ENCODE measurements at regions of chr2 and their contacts with region 1.

Region 1: GRCh38 chr2:106160786-106161261 is 33.3 kb downstream of the UXS1 start:
- DNase-seq: peak; percentile 62
- ATAC-seq: peak; percentile 75
- H3K4me3 Mint-ChIP-seq: peak overlapping the region; percentile 91
- H3K27ac Mint-ChIP-seq: peak overlapping the region; percentile 98
- H3K4me1 Mint-ChIP-seq: peaks cover 68% of the 10 kb centered on the region
- H3K27me3 Mint-ChIP-seq: no peaks in the 10 kb centered on the region

Region 2: GRCh38 chr2:106137731-106138521 is 22.9 kb before region 1 on chr2:
- POLR2A ChIA-PET with region 1: interaction called, 38 read pairs
- DNase-seq: no peak
- ATAC-seq: peak; percentile 70
- H3K4me3 Mint-ChIP-seq: peak overlapping the region; percentile 71
- H3K27ac Mint-ChIP-seq: peak overlapping the region; percentile 91
- H3K4me1 Mint-ChIP-seq: peaks cover 39% of the 10 kb centered on the region
- H3K27me3 Mint-ChIP-seq: no peaks in the 10 kb centered on the region

Region 3: DNA sequence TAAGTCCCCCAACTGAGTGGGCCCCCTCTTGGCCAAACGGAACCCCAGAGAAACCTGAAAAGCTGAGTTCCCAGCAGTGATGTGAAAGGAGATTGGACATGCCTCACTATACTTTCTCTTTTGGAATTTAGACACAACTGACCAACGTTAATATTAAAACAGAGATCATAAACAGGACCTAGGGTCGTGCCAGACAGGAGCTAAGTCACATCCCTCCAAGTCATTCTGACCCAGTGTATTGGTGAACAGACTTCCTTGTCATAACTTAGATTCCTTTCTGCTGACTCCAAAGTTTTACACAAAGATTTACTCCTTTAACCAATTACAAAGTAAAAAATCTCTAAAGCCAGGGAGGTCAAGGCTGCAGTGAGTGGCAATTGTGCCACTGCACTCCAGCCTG is 13.7 kb before region 1 on chr2:
- POLR2A ChIA-PET with region 1: interaction called, 20 read pairs
- DNase-seq: no peak
- ATAC-seq: no peak
- H3K4me3 Mint-ChIP-seq: peak overlapping the region; percentile 35
- H3K27ac Mint-ChIP-seq: peak overlapping the region; percentile 84
- H3K4me1 Mint-ChIP-seq: peaks cover 55% of the 10 kb centered on the region
- H3K27me3 Mint-ChIP-seq: no peaks in the 10 kb centered on the region

Region 4: DNA sequence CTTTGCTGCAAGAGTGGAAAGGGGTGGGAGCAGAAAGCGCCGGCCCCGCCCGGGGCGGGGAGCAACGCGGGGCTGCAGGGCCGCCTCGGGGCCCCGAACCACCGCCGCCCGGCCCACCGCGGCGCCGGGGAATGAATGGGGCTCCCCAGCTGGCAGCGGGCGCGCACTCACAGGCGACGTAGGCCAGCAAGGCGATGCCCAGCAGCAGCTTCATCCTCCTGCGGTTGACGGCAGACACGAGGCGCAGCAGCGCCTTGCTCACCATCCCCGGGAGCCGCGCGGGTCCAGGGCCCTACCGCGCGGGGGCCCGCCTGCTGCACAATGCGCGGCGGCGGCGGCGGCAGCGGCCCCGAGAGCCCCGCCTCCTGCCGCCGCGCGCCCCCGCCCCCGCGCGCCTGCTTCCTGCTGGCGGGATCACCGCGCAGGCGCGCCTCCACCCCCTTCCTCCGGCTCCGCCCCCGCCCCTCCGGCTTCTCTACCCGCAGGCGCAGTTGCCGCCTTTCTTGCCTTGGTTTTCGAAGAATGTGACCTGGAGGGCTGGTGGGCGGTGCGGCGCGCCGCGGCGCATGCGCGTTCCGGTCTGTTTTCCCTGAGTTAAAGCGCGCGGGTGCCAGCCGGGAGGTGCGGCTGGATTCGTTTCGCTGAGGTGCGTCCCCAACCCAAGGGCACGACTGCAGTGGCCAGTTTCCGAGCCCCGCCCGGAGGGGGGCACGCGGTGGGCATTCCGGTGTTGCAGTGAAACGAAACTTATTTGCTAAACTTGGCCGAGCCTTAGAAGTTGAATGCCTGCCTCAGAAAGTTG is 33.4 kb after region 1 on chr2 and contains the start of gene UXS1:
- POLR2A ChIA-PET with region 1: interaction called, 53 read pairs
- DNase-seq: peak; percentile 98
- ATAC-seq: peak; percentile 84
- H3K4me3 Mint-ChIP-seq: peak within 1 kb of the TSS; percentile 89
- H3K27ac Mint-ChIP-seq: peak within 1 kb of the TSS; percentile 81
- H3K4me1 Mint-ChIP-seq: peaks cover 35% of the 10 kb centered on the region
- H3K27me3 Mint-ChIP-seq: no peaks in the 10 kb centered on the region
- total RNA-seq, gene UXS1: 100 to 104 TPM

Measured in activated naive CD8-positive, alpha-beta T cell treated with anti-CD3 and anti-CD28 coated beads, Interleukin-2, amount 10 ng/mL, durations not matched to agents 7 days and 5 days (primary cell).